Mammary epithelial cell (primary cell): ENCODE measurements at regions of chr6 and their contacts with region 1.

Region 1: DNA sequence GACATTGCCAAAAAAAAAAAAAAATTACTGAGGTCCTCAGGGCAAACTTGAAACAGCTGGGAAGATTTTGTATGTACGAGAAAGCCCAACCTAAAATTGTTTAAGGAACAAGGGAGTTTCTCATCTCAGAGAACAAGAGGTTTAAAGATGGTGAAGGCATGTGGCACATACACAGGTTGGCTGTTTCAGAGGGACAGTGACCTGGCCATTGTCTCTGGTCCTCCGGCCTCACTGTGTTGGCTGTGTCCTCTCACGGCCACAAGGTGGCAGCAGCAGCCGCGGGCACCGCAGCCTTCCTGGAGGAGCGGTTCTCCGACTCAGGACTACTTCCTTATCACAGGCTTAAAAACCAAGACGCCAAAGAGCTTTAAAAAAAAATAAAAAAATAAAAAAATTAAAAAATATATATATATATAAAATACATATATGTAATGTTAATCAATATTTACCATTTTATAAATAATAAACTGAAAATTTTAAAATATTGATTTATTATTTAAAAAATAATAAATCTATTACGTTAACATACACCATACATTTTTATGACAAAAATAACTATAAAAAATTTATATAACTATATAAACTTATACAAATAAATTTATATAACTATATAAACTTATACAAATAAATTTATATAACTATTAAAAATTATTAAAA is 52.8 kb downstream of the GTF2H5 start:
- DNase-seq: peak; percentile 66
- H3K4me3 ChIP-seq: no peak overlapping the region
- H3K27ac ChIP-seq: no peak overlapping the region
- H3K4me1 ChIP-seq: peaks cover 15% of the 10 kb centered on the region
- H3K27me3 ChIP-seq: no peaks in the 10 kb centered on the region
- CTCF ChIP-seq: peak; percentile 94 to 96

Region 2: GRCh38 chr6:158311193-158311592 is 90.3 kb after region 1 on chr6:
- CTCF ChIA-PET with region 1: no interaction called
- dilution Hi-C with region 1: no loop called
- in situ Hi-C with region 1: no loop called
- intact Hi-C with region 1: no loop called
- DNase-seq: no peak
- H3K4me3 ChIP-seq: no peak overlapping the region
- H3K27ac ChIP-seq: no peak overlapping the region
- H3K4me1 ChIP-seq: peaks cover 7% of the 10 kb centered on the region
- H3K27me3 ChIP-seq: no peaks in the 10 kb centered on the region
- CTCF ChIP-seq: no peak

Region 3: DNA sequence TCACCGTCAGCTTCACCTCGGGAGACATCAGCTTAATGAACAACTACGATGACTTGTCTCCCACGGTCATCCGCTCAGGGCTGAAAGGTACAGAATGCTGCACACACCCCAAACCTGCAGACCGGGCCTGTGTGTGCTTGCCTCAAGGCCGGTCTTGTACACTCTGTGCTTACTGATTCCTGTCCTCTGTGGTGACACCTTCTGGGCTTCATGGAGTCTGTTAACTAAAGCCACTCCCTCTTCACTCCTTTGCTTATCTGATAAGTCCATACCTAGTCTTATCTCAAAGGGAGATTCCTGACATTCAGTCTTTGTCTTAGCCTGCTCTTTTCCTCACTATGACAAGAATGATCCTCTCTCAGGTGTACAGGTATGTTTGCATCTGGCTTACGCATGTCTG is 231.3 kb after region 1 on chr6:
- CTCF ChIA-PET with region 1: no interaction called
- dilution Hi-C with region 1: no loop called
- in situ Hi-C with region 1: no loop called
- intact Hi-C with region 1: loop called (anchors 1 kb)
- DNase-seq: peak; percentile 48
- H3K4me3 ChIP-seq: no peak overlapping the region
- H3K27ac ChIP-seq: no peak overlapping the region
- H3K4me1 ChIP-seq: no peaks in the 10 kb centered on the region
- H3K27me3 ChIP-seq: no peaks in the 10 kb centered on the region
- CTCF ChIP-seq: peak in 1 of 2 donors; percentile 9

Region 4: DNA sequence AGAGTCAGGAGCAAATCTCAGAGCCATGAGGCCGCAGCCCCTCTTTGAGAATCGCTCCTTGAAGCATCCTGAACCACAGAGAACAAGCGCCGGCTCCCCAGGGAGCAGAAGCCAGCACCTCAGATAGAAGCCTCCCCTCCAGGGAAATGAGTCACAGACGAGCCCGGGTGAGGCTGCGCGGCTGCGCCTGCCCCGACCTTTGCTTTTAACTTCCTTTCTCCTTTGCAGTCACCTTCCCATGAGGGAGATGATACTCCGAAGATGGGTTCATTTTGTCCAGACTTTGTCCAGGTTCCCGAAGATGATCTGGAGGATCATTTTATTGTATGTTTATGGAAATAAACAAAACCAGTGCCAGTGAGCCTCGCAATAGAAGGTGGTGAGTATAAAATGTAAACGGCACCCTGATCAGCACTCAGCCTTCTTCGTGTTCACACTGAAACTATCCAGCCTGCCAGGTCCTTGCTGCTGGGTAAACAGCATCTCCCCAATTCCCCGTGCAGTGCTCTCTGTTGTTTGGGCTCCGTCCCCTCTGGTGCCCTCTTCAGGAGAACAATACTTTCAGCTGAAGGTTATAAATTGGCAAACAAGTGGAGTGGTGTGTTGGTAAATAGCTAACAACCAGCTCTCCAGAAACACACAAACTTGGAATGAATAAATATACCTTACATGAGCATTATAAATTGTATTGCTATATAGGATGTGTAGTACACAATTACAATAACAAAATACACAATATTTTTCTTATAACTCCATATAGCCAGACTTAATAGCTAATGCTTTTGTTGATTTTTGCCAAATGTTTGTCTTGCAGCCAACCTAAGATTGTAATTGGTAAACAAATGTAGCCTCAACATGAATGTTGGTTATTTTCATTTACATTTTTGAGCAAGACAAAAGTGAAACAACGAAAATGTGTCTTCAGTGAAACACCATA is 297.5 kb after region 1 on chr6:
- CTCF ChIA-PET with region 1: interaction called, 12 read pairs
- dilution Hi-C with region 1: no loop called
- in situ Hi-C with region 1: no loop called
- intact Hi-C with region 1: loop called (anchors 1 kb)
- DNase-seq: peak; percentile 79
- H3K4me3 ChIP-seq: peak overlapping the region; percentile 43 to 50 (median 43)
- H3K27ac ChIP-seq: peak overlapping the region; percentile 69
- H3K4me1 ChIP-seq: peaks cover 6% of the 10 kb centered on the region
- H3K27me3 ChIP-seq: no peaks in the 10 kb centered on the region
- CTCF ChIP-seq: peak; percentile 42 to 75

Region 5: GRCh38 chr6:158559895-158560835 is 339.3 kb after region 1 on chr6 and contains the start of gene TMEM181:
- CTCF ChIA-PET with region 1: no interaction called
- dilution Hi-C with region 1: no loop called
- in situ Hi-C with region 1: no loop called
- intact Hi-C with region 1: loop called (anchors 1 kb)
- DNase-seq: peak; percentile 78
- H3K4me3 ChIP-seq: peak within 1 kb of the TSS; percentile 77 to 96 (median 86)
- H3K27ac ChIP-seq: peak within 1 kb of the TSS; percentile 82
- H3K4me1 ChIP-seq: peaks cover 24% of the 10 kb centered on the region
- H3K27me3 ChIP-seq: no peaks in the 10 kb centered on the region
- CTCF ChIP-seq: no peak
- total RNA-seq, gene TMEM181: 29.8 to 45.3 TPM

Region 6: GRCh38 chr6:158605266-158605878 is 384.5 kb after region 1 on chr6:
- CTCF ChIA-PET with region 1: interaction called, 3 read pairs
- dilution Hi-C with region 1: no loop called
- in situ Hi-C with region 1: loop called in 1 of 2 experiments (anchors 25 kb)
- intact Hi-C with region 1: loop called (anchors 1 kb)
- DNase-seq: peak; percentile 53
- H3K4me3 ChIP-seq: no peak overlapping the region
- H3K27ac ChIP-seq: no peak overlapping the region
- H3K4me1 ChIP-seq: no peaks in the 10 kb centered on the region
- H3K27me3 ChIP-seq: no peaks in the 10 kb centered on the region
- CTCF ChIP-seq: peak; percentile 78

Region 7: DNA sequence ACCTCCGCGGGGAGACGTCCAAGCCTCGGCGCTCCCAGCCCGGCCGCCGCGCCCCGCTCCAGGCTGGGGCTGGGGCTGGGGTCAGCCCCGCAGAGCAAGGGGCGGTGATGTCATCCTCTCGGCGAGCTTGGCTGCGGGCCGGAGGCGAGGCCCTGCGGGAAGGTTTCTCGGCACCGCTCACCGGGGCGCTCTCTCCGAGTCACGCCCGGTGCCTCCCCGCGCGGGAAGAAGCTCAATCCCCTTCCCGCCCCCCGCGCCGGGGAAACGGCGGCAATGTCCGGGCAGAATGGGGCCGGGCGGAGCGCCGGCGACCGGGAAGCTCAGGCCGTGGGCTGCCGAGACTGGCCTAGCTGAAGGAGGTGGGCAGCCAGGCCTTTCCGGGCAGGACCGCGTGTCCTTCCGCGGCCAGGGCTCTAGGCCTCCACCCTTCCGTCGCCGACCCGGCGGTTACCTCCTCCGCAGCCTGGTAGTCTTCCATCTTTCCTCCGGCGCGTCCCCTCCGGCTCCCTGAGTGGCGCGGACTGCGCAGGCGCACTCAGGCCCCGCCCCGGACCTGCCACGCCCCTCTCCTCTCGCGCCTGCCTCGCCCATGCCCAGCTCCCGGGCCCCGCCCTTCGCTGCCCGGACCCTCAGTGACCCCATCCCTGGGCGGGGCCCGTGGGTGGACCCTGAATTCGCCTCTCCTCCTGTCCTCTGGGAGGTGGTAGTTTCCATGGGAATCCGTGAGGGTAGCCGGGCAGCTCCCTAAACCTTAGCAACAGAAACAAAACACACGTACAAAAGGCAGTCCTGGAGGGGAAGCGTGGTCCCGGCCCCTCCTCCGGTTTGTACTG is 423.5 kb after region 1 on chr6 and contains the start of gene DYNLT1:
- CTCF ChIA-PET with region 1: no interaction called
- dilution Hi-C with region 1: no loop called
- in situ Hi-C with region 1: no loop called
- intact Hi-C with region 1: loop called (anchors 2 kb)
- DNase-seq: peak; percentile 97
- H3K4me3 ChIP-seq: peak within 1 kb of the TSS; percentile 59 to 98 (median 77)
- H3K27ac ChIP-seq: peak within 1 kb of the TSS; percentile 97
- H3K4me1 ChIP-seq: peaks cover 47% of the 10 kb centered on the region
- H3K27me3 ChIP-seq: no peaks in the 10 kb centered on the region
- CTCF ChIP-seq: no peak
- total RNA-seq, gene DYNLT1: 51.8 to 129 TPM